Activated CD8-positive, alpha-beta T cell treated with anti-CD3 and anti-CD28 coated beads for 36 hours (primary cell): ENCODE measurements at regions of chr1 and their contacts with region 1.

Region 1: DNA sequence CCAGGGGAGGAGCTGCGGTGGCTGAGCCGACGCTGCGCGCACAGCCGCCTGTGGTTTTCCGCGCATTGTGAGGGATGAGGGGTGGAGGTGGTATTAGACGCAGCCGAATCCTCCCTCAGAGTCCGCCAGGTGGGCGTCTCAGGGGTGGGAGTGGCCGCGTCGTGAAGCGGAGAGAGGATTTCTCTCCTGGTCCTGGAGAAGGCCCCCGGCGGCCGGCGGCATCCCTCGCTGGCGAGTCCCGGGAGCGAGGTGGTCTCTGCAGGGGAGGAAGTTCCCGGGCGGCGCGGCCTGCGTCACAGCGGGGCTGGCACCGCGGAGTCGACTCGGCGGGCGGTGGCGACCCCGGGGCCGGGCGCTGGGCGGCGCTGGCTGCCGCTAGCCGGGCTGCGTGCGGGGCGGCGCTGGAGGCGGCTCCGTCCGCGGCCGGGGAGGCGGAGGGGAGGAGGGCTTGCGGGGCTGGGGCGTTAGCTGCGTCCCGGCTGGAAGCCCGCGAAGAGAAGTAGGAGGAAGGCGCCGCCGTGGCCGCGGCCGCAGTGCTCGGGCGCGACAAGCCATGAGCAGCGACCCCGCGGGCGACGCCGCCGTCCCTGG is at the start of gene LRRC8C:
- DNase-seq: peak; percentile 90
- ATAC-seq: peak; percentile 81
- H3K4me3 Mint-ChIP-seq: peak within 1 kb of the TSS; percentile 93
- H3K27ac Mint-ChIP-seq: peak within 1 kb of the TSS; percentile 96
- H3K4me1 Mint-ChIP-seq: peaks cover 68% of the 10 kb centered on the region
- H3K27me3 Mint-ChIP-seq: no peaks in the 10 kb centered on the region
- CTCF ChIP-seq: peak; percentile 43
- total RNA-seq, gene LRRC8C: 34.4 to 37.4 TPM

Region 2: DNA sequence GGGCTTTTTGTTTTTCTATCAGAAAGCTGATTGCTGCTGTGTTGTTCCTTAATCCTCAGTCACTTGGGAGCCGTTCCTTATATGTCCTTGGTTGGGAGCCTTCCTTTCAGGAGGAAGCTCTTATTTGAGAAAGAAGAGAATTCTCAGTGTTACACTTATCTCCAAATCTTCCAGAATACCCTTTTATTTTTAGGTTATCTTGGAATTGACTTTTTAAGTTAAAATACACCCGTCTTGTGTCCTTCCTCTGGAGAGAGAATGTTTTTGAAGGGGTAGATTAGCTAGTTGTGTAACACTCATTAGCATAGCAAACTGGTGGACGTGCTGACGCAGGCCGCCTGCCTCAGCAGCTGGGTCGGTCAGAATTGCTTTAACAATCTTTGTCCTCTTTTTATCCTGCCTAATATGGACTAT is 66.0 kb before region 1 on chr1:
- CTCF ChIA-PET with region 1: no interaction called
- POLR2A ChIA-PET with region 1: no interaction called
- intact Hi-C with region 1: no loop called
- DNase-seq: no peak
- ATAC-seq: no peak
- H3K4me3 Mint-ChIP-seq: no peak overlapping the region
- H3K27ac Mint-ChIP-seq: no peak overlapping the region
- H3K4me1 Mint-ChIP-seq: peaks cover 50% of the 10 kb centered on the region
- H3K27me3 Mint-ChIP-seq: no peaks in the 10 kb centered on the region
- CTCF ChIP-seq: no peak

Region 3: GRCh38 chr1:89598450-89599331 is 34.1 kb before region 1 on chr1:
- CTCF ChIA-PET with region 1: interaction called, 76 read pairs
- POLR2A ChIA-PET with region 1: interaction called, 73 read pairs
- intact Hi-C with region 1: no loop called
- DNase-seq: no peak
- ATAC-seq: no peak
- H3K4me3 Mint-ChIP-seq: no peak overlapping the region
- H3K27ac Mint-ChIP-seq: peak overlapping the region; percentile 64
- H3K4me1 Mint-ChIP-seq: peaks cover 81% of the 10 kb centered on the region
- H3K27me3 Mint-ChIP-seq: no peaks in the 10 kb centered on the region
- CTCF ChIP-seq: peak; percentile 95

Region 4: GRCh38 chr1:89615676-89616598 is 16.8 kb before region 1 on chr1:
- CTCF ChIA-PET with region 1: interaction called, 84 read pairs
- POLR2A ChIA-PET with region 1: interaction called, 76 read pairs
- intact Hi-C with region 1: no loop called
- DNase-seq: peak; percentile 48
- ATAC-seq: no peak
- H3K4me3 Mint-ChIP-seq: no peak overlapping the region
- H3K27ac Mint-ChIP-seq: no peak overlapping the region
- H3K4me1 Mint-ChIP-seq: peaks cover 70% of the 10 kb centered on the region
- H3K27me3 Mint-ChIP-seq: no peaks in the 10 kb centered on the region
- CTCF ChIP-seq: peak; percentile 54

Region 5: DNA sequence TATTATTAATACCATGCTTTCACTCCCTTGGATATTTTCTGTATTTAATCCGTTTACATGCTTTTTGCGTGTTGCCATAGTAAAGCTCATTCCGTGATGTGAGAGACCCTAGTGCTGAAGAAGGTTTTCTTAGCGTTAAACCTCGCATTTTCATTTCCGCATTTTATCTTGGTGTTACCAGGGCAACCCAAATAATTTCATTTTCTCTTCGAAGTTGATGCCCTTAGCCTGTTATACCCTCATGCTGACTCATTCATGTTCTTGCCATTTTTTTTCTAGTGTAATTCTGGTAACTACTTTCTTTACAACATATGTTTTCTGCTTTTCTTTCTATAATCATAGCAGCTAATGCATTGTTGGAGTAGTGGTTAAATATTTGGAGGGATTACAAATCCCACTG is 37.4 kb after region 1 on chr1:
- CTCF ChIA-PET with region 1: interaction called, 3 read pairs
- POLR2A ChIA-PET with region 1: interaction called, 4 read pairs
- intact Hi-C with region 1: loop called (anchors 5 kb)
- DNase-seq: no peak
- ATAC-seq: peak; percentile 79
- H3K4me3 Mint-ChIP-seq: peak overlapping the region; percentile 34
- H3K27ac Mint-ChIP-seq: peak overlapping the region; percentile 84
- H3K4me1 Mint-ChIP-seq: peaks cover 95% of the 10 kb centered on the region
- H3K27me3 Mint-ChIP-seq: no peaks in the 10 kb centered on the region
- CTCF ChIP-seq: no peak

Region 6: DNA sequence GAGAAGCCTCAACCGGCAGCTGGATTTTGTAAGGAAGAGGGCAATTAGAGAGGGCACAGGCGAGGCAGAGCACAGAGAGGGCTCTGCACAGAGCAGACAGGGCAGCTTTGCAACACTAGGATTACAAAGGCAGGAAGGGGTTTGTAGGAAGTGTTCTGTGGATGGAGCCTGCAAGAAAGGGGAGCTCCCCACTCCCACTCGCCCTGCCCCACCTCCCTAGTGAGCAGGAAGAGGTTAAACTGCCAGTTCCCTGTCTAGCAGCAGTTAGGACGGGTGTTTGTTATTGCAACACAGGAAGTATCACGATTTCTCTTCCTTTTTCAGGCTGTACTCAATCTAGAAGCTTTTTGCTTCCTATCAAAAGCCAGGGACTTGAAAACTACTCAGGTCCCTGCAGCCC is 124.8 kb after region 1 on chr1:
- CTCF ChIA-PET with region 1: interaction called, 147 read pairs
- POLR2A ChIA-PET with region 1: interaction called, 19 read pairs
- intact Hi-C with region 1: no loop called
- DNase-seq: peak; percentile 86
- ATAC-seq: peak; percentile 86
- H3K4me3 Mint-ChIP-seq: peak overlapping the region; percentile 73
- H3K27ac Mint-ChIP-seq: peak overlapping the region; percentile 93
- H3K4me1 Mint-ChIP-seq: peaks cover 89% of the 10 kb centered on the region
- H3K27me3 Mint-ChIP-seq: no peaks in the 10 kb centered on the region
- CTCF ChIP-seq: no peak

Region 7: DNA sequence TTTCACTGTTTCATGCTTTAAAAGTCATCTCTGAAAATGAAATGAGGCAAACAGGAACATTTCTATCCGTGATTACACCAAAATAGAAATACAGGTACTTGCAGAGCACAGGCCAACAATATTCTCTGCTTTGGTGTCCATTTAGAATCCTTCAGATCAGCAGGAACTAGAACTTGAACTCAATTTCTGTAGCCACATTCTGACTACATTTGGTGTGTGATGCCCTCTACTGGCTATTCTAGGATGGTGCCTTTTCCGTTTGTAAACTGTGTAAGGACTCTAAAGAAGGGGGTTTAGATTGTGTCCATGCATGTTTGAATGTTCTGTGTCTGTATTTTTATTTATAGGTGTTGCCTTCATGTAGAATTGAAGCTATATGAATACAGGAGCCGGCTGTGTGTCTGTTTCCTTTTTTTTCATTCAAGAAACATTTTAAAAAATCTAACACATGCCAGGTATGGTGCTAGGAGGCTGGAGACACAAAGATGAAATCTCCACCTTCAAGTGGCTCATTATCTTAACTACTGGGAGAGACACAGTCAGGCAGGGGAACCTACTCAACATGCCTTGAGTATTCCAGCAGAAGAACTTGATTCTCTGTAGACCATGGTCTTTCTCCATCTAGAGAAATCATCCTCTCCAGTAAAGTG is 354.5 kb after region 1 on chr1:
- CTCF ChIA-PET with region 1: no interaction called
- POLR2A ChIA-PET with region 1: no interaction called
- intact Hi-C with region 1: loop called (anchors 10 kb)
- DNase-seq: peak; percentile 65
- ATAC-seq: peak; percentile 93
- H3K4me3 Mint-ChIP-seq: no peak overlapping the region
- H3K27ac Mint-ChIP-seq: no peak overlapping the region
- H3K4me1 Mint-ChIP-seq: peaks cover 10% of the 10 kb centered on the region
- H3K27me3 Mint-ChIP-seq: peaks cover 4% of the 10 kb centered on the region
- CTCF ChIP-seq: peak; percentile 83